ENCODE measurements at regions of chr15 and their contacts with region 1.

Region 1: GRCh38 chr15:69160141-69160993 is at the start of gene GLCE:
- DNase-seq: peak; percentile 95 to 97
- ATAC-seq: peak; percentile 97 to 100 (median 99)
- H3K4me3 ChIP-seq: peak within 1 kb of the TSS; percentile 71 to 97 (median 76)
- H3K27ac ChIP-seq: peak within 1 kb of the TSS in 9 of 10 donors; percentile 75 to 92 (median 84)
- H3K4me1 ChIP-seq: peaks cover 0 to 27% (median 11%) of the 10 kb centered on the region in 9 donors
- H3K27me3 ChIP-seq: no peaks in the 10 kb centered on the region
- CTCF ChIP-seq: no peak
- total RNA-seq, gene GLCE: 6.0 to 13.3 (median 8.6) TPM

Region 2: DNA sequence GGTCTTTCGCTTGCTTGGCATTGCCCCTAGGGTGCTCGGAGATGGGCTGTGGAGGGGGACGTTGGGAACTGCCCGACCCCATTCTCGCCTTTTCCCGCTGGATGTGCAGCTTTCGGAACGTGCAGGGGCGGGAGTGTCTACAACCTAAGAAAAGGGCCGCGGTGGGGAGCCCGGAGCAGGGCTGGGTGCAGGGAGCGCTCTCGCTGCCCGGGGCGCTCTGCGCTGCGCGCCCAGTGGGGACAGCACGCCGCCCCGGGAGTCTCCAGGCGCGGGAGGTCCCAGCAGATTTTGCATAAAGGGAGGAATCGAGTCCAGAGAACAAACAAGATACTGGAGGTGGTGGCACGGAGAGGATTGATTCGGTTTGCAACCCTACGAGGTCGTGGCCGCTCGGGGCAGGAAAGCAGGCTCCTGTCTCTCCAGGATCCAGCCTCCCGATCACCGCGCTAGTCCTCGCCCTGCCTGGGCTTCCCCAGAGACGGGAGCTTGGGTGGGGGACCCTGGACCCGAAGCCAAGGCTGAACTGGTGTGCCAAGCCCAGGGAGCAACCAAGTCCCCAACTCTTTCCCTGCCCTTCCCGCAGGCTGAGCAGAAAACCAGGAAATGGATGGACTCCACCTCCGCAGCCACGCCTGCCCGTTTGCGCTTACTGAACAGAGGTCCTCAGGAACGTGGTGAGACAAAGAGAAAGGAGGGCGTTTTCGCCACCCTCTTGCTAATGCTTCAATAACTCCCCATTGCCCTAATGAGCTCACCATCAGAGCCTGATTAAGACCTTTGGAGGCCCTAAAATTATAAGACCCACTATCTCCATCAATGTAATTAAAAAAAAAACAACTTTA is 86.1 kb before region 1 on chr15:
- intact Hi-C with region 1: loop called in 2 of 10 experiments (anchors 5 kb)
- DNase-seq: peak; percentile 62 to 69
- ATAC-seq: peak; percentile 89 to 97 (median 92)
- H3K4me3 ChIP-seq: peak overlapping the region; percentile 37 to 67 (median 64)
- H3K27ac ChIP-seq: peak overlapping the region; percentile 21 to 83 (median 68)
- H3K4me1 ChIP-seq: peaks cover 0 to 25% (median 12%) of the 10 kb centered on the region in 9 donors
- H3K27me3 ChIP-seq: peaks cover 0 to 28% (median 0%) of the 10 kb centered on the region in 7 donors
- CTCF ChIP-seq: peak in 3 of 9 donors; percentile 10 to 36 (median 24)

Region 3: DNA sequence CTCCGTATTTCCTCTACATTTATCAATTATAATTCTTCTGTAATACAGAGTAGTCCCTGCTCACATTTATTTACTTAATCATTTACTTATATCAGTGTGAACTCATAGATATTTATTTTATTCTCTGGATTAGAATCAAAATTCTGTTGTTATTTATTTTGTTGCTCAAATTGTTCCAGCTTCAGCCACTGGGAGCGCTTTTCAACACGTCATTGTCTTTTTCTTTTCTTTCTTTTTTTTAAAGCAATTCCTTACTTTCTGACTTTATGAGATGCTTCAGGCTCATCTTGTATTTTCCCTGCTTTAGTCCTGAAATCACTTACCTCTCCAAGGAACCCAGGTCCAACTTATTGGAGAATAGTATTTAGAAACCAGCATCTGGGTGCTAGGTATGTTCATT is 53.4 kb after region 1 on chr15:
- intact Hi-C with region 1: loop called in 1 of 10 experiments (anchors 10 kb)
- DNase-seq: no peak
- ATAC-seq: no peak
- H3K4me3 ChIP-seq: no peak overlapping the region
- H3K27ac ChIP-seq: no peak overlapping the region
- H3K4me1 ChIP-seq: peaks cover 0 to 4% (median 0%) of the 10 kb centered on the region in 9 donors
- H3K27me3 ChIP-seq: no peaks in the 10 kb centered on the region
- CTCF ChIP-seq: no peak

Region 4: DNA sequence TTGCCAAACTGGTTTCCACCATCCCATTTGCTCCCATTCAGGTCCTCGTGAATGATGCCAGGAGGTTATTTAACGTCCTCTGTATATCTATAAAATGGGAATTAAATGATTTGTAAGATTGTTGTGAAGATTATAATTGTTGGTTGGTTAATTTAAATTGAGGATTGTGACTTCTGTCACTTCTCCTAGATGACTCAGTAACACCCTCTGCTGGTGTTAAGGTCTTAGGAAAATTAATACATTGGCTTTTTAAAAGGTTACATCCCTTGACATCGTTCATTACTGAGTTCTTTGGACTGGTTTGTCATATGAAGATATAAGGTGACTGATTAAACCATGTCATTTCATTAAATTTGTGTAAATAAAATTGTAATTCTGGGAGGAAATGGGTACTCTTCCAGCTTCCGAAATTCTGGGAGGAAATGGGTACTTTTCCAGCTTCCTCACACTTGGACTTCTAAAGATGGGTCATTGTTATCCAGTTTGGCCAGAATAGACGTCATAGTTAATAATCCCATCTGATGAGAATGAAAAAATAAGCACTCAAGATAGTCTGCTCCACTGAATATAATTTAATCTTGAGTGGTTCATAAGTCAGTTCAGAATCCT is 105.1 kb after region 1 on chr15:
- intact Hi-C with region 1: loop called in 6 of 10 experiments (anchors 2 to 10 kb)
- DNase-seq: no peak
- ATAC-seq: no peak
- H3K4me3 ChIP-seq: no peak overlapping the region
- H3K27ac ChIP-seq: no peak overlapping the region
- H3K4me1 ChIP-seq: peaks cover 0 to 11% (median 0%) of the 10 kb centered on the region in 9 donors
- H3K27me3 ChIP-seq: no peaks in the 10 kb centered on the region
- CTCF ChIP-seq: peak; percentile 45 to 76 (median 67)